CD8-positive, alpha-beta T cell (primary cell): ENCODE measurements at regions of chr1 and their contacts with region 1.

Region 1: DNA sequence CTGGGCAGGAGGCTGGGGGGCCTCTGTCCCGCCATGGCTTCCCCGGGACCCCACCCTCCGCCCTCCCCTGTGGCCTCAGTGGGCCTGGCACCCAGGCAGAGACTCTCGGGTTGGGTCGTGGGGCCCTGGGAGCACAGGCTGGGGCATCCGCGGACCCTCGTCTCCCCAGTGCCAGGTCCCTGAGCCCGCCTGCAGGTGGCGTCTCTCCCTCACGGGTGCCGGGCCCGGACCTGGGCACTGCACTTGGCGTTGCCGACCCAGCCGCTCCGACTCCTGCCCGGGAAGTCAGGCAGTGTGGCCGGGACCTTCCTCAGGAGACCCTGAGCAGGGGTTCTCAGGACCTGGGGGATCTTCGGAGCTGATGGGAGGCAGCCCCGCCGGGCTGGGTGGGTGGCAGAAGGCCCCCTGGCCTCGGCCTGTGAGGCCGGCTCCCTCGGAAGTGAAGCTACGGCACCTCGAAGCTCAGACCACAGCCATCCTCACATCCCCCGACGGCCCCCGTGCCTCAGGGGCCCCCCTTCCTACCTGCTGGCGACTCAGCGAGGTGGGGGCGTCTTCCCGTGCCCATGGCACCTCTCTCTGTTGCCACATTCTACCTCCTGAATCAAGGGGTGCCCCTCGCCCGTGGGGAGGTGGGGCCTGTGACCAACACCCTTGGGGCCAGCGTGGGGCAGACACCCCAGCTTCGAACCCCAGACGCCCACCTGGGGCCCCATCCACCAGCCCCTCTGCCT is 6.4 kb upstream of the C1orf159 start:
- DNase-seq: peak; percentile 68 to 92 (median 82)
- ATAC-seq: peak; percentile 98
- H3K4me3 ChIP-seq: peak overlapping the region; percentile 43 to 46
- H3K4me3 Mint-ChIP-seq: peak overlapping the region; percentile 37
- H3K27ac ChIP-seq: no peak overlapping the region
- H3K27ac Mint-ChIP-seq: no peak overlapping the region
- H3K4me1 ChIP-seq: peaks cover 12% of the 10 kb centered on the region
- H3K4me1 Mint-ChIP-seq: peaks cover 4% of the 10 kb centered on the region
- H3K27me3 ChIP-seq: peaks cover 0 to 3% of the 10 kb centered on the region in 2 experiments
- H3K27me3 Mint-ChIP-seq: peaks cover 4% of the 10 kb centered on the region
- CTCF ChIP-seq: peak; percentile 81

Region 2: GRCh38 chr1:1137256-1138045 is 15.2 kb after region 1 on chr1:
- CTCF ChIA-PET with region 1: interaction called, 11 read pairs
- POLR2A ChIA-PET with region 1: no interaction called
- intact Hi-C with region 1: no loop called
- DNase-seq: peak; percentile 36 to 89 (median 75)
- ATAC-seq: peak; percentile 83
- H3K4me3 ChIP-seq: peak overlapping the region in 1 of 2 experiments; percentile 3
- H3K4me3 Mint-ChIP-seq: peak overlapping the region; percentile 74
- H3K27ac ChIP-seq: no peak overlapping the region
- H3K27ac Mint-ChIP-seq: peak overlapping the region; percentile 80
- H3K4me1 ChIP-seq: peaks cover 26% of the 10 kb centered on the region
- H3K4me1 Mint-ChIP-seq: peaks cover 17% of the 10 kb centered on the region
- H3K27me3 ChIP-seq: peaks cover 0 to 3% of the 10 kb centered on the region in 2 experiments
- H3K27me3 Mint-ChIP-seq: no peaks in the 10 kb centered on the region
- CTCF ChIP-seq: no peak

Region 3: DNA sequence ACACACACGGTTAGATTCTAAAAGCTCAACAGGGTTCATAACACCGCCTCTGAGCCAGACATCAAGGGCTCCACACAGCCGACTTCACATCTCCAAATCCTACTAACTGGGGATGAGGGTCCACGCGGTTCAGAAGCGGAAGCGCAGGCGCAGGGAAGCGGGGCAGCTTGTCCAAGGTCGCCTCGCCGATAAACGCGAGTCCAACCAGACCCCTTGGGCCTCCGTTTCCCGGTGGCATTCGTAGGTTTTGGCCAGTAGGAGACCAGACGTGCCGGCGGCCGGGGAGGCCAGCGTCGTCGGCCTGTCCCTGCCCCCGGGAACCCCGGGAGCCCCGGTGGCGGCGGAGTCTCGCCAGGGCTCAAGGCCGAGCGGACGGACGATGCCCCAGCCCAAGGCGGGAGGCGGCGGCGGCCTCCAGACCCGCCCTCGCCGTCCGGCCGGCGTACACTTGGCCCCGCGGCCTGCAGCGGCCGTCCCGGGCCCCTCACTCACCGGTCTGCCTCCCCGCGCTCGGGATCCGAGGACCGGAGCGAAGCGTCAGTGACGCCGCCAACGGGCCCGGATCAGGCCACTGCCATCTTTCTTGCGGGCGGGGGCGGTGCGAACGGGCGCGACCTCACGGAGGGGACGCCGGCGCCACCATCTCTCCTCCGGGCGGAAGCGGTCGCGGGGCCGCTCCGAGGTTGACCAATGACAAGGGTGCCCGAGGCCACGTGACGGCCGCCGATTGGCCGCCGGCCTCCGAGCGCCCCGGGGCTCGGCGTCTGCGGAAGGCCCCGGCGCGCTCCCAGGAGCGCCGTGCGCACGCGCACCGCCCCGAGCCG is 109.4 kb after region 1 on chr1 and contains the start of gene SDF4:
- CTCF ChIA-PET with region 1: interaction called, 13 read pairs
- POLR2A ChIA-PET with region 1: interaction called, 3 read pairs
- intact Hi-C with region 1: loop called in 1 of 2 experiments (anchors 1 kb)
- DNase-seq: peak; percentile 91 to 99 (median 96)
- ATAC-seq: peak; percentile 93
- H3K4me3 ChIP-seq: peak within 1 kb of the TSS; percentile 92 to 96
- H3K4me3 Mint-ChIP-seq: peak within 1 kb of the TSS; percentile 93
- H3K27ac ChIP-seq: peak within 1 kb of the TSS; percentile 80 to 88
- H3K27ac Mint-ChIP-seq: peak within 1 kb of the TSS; percentile 92
- H3K4me1 ChIP-seq: peaks cover 40% of the 10 kb centered on the region
- H3K4me1 Mint-ChIP-seq: peaks cover 39% of the 10 kb centered on the region
- H3K27me3 ChIP-seq: no peaks in the 10 kb centered on the region
- H3K27me3 Mint-ChIP-seq: no peaks in the 10 kb centered on the region
- CTCF ChIP-seq: no peak
- total RNA-seq, gene SDF4: 66.6 to 70.3 TPM

Region 4: GRCh38 chr1:1264868-1265272 is 142.6 kb after region 1 on chr1:
- CTCF ChIA-PET with region 1: interaction called, 8 read pairs
- POLR2A ChIA-PET with region 1: no interaction called
- intact Hi-C with region 1: loop called in 1 of 2 experiments (anchors 1 kb)
- DNase-seq: peak in 1 of 9 experiments; percentile 48
- ATAC-seq: peak; percentile 63
- H3K4me3 ChIP-seq: no peak overlapping the region
- H3K4me3 Mint-ChIP-seq: no peak overlapping the region
- H3K27ac ChIP-seq: no peak overlapping the region
- H3K27ac Mint-ChIP-seq: no peak overlapping the region
- H3K4me1 ChIP-seq: peaks cover 7% of the 10 kb centered on the region
- H3K4me1 Mint-ChIP-seq: peaks cover 36% of the 10 kb centered on the region
- H3K27me3 ChIP-seq: no peaks in the 10 kb centered on the region
- H3K27me3 Mint-ChIP-seq: no peaks in the 10 kb centered on the region
- CTCF ChIP-seq: no peak

Region 5: DNA sequence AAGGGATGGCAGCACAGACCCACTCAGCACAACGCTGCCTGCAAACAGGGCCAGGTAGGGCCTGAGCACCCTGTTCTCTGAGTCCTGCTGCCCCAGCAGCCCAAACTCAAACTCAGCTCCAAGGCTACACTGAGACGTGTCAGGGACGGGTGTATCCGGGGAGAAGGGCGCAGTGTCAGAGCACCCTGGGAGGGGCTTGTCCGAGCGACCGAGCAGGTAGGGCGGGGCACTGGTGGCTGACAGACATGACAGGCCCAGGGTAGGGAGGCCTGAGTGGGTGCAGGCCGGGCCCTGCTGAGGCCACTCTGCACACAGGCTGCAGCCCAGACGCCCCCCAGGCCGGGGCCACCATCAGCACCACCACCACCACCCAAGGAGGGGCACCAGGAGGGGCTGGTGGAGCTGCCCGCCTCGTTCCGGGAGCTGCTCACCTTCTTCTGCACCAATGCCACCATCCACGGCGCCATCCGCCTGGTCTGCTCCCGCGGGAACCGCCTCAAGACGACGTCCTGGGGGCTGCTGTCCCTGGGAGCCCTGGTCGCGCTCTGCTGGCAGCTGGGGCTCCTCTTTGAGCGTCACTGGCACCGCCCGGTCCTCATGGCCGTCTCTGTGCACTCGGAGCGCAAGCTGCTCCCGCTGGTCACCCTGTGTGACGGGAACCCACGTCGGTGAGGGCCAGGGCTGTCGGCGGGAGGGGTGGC is 163.5 kb after region 1 on chr1:
- CTCF ChIA-PET with region 1: interaction called, 101 read pairs
- POLR2A ChIA-PET with region 1: no interaction called
- intact Hi-C with region 1: loop called in 1 of 2 experiments (anchors 2 kb)
- DNase-seq: peak in 2 of 9 experiments; percentile 8 to 10
- ATAC-seq: no peak
- H3K4me3 ChIP-seq: no peak overlapping the region
- H3K4me3 Mint-ChIP-seq: no peak overlapping the region
- H3K27ac ChIP-seq: no peak overlapping the region
- H3K27ac Mint-ChIP-seq: no peak overlapping the region
- H3K4me1 ChIP-seq: no peaks in the 10 kb centered on the region
- H3K4me1 Mint-ChIP-seq: no peaks in the 10 kb centered on the region
- H3K27me3 ChIP-seq: no peaks in the 10 kb centered on the region
- H3K27me3 Mint-ChIP-seq: no peaks in the 10 kb centered on the region
- CTCF ChIP-seq: no peak